ENCODE measurements at regions of chr6 and their contacts with region 1.

Region 1: DNA sequence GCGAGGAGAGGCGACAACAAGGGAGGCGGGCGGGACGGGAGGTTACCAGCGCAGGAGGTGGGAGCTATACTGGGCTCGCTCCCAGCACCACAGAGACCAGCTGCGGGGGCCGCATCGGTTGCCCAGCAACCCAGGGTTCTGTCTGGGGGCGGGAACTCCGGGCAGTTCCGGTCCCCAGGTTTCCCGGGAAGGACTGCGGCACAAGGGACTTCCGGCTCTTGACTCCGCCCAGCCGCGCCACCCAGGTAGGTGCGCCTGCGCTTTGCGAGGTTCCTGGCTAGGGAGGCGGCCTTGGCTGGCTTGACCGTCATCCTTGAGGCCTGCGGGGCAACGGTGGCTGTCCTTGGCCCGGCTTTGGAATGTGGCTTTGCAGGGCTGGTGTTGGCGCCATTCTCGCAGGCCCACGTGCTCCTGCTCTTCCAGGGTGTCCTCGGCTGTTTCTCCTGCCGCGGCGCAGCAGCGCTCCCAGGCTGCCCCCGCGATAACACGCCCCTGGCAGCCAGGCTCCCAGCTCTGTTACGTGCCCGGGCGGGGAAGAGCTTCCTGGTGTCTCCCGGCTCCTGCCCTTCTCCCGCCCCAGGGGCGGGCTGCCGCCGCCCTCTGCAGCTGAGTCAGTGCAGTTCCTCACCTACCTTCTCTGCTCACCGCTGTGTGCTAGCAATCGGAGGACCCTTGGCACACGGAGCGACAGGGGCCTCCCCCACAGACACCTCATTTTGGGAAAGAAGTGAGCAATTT is at the start of gene RSPH3:
- DNase-seq: peak; percentile 91 to 93
- H3K4me3 ChIP-seq: peak within 1 kb of the TSS; percentile 94
- H3K27ac ChIP-seq: peak within 1 kb of the TSS; percentile 91
- H3K4me1 ChIP-seq: peaks cover 62% of the 10 kb centered on the region
- H3K27me3 ChIP-seq: no peaks in the 10 kb centered on the region
- CTCF ChIP-seq: peak; percentile 17; the same call in 1 of the 2 replicates
- total RNA-seq, gene RSPH3: 10.9 and 16.6 TPM in 2 replicates

Region 2: DNA sequence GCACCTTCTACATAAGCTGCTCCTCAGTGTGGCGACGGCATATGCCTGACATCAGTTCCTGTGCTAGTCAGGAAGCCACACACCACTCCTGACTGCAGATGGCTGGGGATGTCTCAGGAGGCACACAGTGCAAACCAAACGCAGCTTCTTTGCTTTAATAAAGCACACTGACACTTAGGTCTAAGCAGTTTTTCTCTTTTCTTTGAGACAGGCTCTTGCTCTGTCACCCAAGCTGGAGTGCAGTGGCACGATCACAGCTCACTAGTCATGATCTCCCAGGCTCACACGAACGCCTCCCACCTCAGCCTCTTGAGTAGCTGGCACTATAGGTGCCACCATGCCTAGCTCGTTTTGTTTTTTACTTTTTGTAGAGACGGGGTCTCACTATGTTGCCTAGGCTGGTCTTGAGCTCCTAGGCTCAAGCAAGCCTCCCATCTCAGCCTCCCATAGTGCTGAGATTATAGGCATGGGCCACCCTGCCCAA is 210.4 kb before region 1 on chr6:
- CTCF ChIA-PET with region 1: no interaction called
- POLR2A ChIA-PET with region 1: interaction called, 23 read pairs
- intact Hi-C with region 1: no loop called
- DNase-seq: no peak
- H3K4me3 ChIP-seq: no peak overlapping the region
- H3K27ac ChIP-seq: peak overlapping the region; percentile 48
- H3K4me1 ChIP-seq: peaks cover 94% of the 10 kb centered on the region
- H3K27me3 ChIP-seq: no peaks in the 10 kb centered on the region
- CTCF ChIP-seq: no peak

Region 3: DNA sequence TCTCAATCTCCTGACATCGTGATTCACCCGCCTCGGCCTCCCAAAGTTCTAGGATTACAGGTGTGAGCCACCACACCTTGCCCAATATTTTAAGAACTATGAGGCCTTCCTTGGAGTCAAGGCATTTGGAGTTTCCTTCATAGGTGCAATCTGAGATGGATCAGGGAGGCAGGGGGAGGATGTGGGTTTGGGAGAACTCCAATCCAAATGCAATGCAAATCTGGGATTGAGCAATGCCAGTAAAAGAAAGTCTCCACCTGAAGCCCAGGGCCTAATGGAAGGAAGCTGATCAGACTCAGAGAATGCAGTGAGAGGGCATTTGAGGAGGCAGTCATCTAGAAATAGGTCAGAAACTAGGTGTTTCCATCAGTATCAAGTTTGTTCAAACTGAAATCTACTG is 21.1 kb before region 1 on chr6:
- CTCF ChIA-PET with region 1: no interaction called
- POLR2A ChIA-PET with region 1: interaction called, 11 read pairs
- intact Hi-C with region 1: no loop called
- DNase-seq: no peak
- H3K4me3 ChIP-seq: no peak overlapping the region
- H3K27ac ChIP-seq: no peak overlapping the region
- H3K4me1 ChIP-seq: peaks cover 8% of the 10 kb centered on the region
- H3K27me3 ChIP-seq: no peaks in the 10 kb centered on the region
- CTCF ChIP-seq: no peak

Region 4: GRCh38 chr6:159595173-159595572 is 595.3 kb after region 1 on chr6:
- CTCF ChIA-PET with region 1: no interaction called
- POLR2A ChIA-PET with region 1: no interaction called
- intact Hi-C with region 1: no loop called
- DNase-seq: no peak
- H3K4me3 ChIP-seq: no peak overlapping the region
- H3K27ac ChIP-seq: no peak overlapping the region
- H3K4me1 ChIP-seq: no peaks in the 10 kb centered on the region
- H3K27me3 ChIP-seq: peaks cover 15% of the 10 kb centered on the region
- CTCF ChIP-seq: no peak

Measured in PC-9 (cell line).